Left ventricle myocardium inferior (tissue), 1 donor: ENCODE measurements at regions of chr5 and their contacts with region 1.

Region 1: DNA sequence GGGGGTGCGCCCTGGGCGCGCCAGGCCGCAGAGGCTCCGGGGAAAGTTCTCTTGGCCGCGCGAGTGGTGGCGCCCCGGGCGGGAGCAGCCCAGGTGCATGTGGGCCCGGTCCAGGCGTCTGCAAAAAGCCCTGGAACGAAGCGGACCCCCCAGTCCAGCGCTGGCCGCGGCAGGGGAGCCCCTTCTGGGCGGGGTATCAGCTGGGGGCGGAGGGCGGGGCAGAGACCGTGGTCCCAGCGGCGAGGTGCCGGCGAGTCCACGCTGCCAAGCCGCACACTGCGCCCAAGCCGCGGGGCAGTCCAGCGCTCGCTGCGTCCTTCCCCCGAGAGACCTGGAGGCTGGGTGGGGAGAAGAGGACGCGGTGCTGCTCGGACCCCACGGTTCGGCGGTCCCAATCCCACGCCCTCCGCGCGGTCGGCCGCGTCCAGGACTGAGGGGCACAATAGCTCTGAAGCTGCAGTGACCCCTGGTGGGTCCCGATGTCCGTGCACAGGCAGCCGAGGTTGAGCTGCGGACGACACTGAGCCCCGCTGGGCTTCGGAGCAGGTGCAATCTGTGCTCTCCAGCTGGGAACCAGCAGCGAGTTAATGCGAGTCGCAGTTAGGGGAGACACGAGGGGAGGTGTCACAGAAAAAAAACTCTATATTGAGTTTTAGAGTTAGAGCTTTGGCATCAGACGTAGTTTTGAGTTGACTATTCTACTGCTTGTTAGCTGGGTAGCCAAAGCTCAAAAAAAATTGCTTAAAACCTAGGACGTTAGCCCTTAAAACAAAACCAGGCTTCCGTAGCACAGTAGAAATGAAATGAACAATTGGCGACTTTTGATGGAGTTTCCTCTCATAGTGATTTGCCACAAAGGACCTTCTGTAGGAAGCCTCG is 1.1 kb upstream of the EPB41L4A start:
- DNase-seq: peak; percentile 89
- H3K4me3 ChIP-seq: peak overlapping the region; percentile 88
- H3K27ac ChIP-seq: peak overlapping the region; percentile 95
- H3K4me1 ChIP-seq: peaks cover 50% of the 10 kb centered on the region
- H3K27me3 ChIP-seq: no peaks in the 10 kb centered on the region
- CTCF ChIP-seq: peak; percentile 97

Region 2: DNA sequence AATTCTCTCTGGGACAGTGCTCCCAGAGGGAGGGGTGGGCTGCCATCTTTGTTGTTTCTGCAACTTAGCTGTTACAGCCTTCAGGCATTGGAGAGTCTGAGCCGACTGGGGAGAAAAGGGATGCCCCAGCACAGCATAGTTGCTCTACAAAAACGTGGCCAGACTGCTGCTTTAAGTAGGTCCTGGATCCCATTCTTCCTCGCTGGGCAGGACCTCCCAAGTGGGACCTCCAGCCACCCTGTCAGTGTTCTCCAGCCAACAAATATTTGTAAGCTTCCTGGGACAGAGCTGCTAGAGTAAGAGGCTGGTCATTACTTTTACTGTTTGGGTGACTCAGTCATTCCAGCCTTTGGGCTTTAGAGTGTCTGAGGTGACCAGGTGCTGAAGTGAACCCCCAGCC is 370.5 kb before region 1 on chr5:
- intact Hi-C with region 1: no loop called
- DNase-seq: no peak
- H3K4me3 ChIP-seq: no peak overlapping the region
- H3K27ac ChIP-seq: no peak overlapping the region
- H3K4me1 ChIP-seq: no peaks in the 10 kb centered on the region
- H3K27me3 ChIP-seq: no peaks in the 10 kb centered on the region
- CTCF ChIP-seq: no peak

Region 3: DNA sequence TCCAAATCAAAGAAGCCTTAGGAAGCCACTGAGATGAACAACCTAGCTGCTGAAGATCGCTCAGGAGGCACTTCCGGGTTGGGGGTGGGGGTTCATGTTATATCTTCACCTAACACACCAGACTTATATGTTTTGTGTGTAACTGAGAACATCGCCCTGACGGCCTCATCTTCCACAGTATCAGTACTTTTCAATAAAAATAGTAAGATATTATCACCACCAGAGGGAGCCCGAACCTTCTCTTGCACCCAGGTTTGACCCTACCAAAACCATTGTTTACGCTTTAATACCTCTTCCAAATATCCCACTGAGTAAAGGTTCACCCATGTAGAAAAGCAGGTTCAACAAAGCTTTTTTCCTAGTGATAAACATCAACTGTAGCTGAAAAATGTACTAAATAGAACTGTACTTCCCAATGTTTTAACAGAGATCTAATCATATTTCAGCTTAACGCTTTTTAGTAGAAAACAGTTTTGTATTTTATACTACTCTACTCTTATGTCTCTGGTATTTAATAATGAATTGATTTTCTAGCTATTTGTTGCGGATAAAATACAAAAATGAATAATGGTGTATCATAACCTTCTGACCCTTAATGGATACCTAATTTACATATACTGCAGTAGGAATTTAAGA is 245.1 kb before region 1 on chr5:
- intact Hi-C with region 1: loop called (anchors 5 kb)
- DNase-seq: no peak
- H3K4me3 ChIP-seq: no peak overlapping the region
- H3K27ac ChIP-seq: no peak overlapping the region
- H3K4me1 ChIP-seq: no peaks in the 10 kb centered on the region
- H3K27me3 ChIP-seq: no peaks in the 10 kb centered on the region
- CTCF ChIP-seq: peak; percentile 70

Region 4: GRCh38 chr5:112205846-112206245 is 214.4 kb before region 1 on chr5:
- intact Hi-C with region 1: loop called (anchors 2 kb)
- DNase-seq: no peak
- H3K4me3 ChIP-seq: no peak overlapping the region
- H3K27ac ChIP-seq: no peak overlapping the region
- H3K4me1 ChIP-seq: peaks cover 16% of the 10 kb centered on the region
- H3K27me3 ChIP-seq: no peaks in the 10 kb centered on the region
- CTCF ChIP-seq: no peak